HEK293 (cell line): ENCODE measurements at regions of chr3 and their contacts with region 1.

Region 1: DNA sequence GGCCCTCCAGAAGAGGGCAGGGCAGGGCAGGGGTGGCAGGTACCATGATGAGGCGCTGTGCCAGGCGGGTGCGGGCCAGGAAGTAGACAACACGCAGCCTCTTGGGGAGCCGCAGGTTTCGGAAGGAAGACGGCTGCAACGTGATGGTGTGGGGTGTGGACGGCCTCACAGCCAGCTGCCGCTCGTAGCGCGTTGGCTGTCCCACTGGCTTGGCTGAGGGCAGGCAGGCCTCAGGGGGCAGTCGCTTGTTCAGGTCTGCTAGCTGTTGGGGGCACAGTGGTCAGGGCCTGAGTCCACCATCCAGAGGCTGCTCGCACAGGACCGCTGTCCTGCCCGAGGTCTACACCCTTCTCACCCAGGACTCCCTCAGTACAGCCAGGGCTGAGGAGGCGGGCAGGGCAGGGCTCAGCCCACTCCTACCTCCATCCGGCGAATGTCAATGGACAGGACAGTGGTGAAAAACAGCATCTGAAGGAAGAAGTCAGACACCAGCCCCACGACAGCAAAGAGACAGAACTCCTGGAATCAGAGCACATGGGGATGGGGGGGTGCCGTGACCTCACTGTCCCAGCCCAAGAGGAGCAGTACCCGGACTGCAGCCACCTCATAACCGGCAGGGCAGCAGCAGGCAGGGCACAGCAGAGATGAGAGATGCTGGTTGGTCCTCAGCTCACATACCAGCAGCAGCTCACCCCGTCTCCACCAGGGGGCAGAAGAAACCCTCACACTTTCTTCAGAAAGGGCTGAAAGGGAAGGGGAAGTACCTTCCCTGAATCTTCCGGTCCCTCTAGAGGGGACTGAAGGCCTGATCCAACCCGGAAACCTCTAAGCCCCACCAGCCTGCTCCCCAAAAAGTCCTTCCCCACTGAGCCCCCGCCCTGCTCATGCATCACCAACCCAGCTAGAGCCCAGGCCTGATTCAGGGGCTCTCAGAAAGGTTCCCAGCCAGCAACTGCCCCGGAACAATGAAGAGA is 40.0 kb downstream of the PTPN23 start:
- H3K4me3 ChIP-seq: no peak overlapping the region
- H3K27ac ChIP-seq: no peak overlapping the region
- H3K4me1 ChIP-seq: no peaks in the 10 kb centered on the region
- CTCF ChIP-seq: peak; percentile 78

Region 2: DNA sequence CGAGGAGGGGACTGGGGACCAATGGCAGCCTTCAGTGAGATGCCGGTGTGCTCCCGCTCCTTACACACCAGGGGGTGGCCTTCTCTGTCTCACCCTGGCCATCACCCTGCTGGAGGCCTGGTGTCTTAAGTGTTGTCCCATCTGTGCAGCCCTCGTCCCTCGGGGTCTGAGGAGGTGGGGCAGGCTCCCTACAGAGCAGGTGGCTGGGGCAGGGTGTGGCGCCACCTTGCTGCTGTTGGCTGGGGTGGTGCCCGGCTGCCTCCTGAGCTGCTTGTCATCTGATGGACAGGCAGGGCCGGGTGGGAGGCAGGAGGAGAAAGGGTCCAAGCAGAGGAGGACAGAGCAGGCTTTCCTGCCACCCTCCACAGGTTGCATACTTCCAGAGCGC is 14.0 kb before region 1 on chr3:
- CTCF ChIA-PET with region 1: interaction called, 13 read pairs
- POLR2A ChIA-PET with region 1: interaction called, 3 read pairs
- H3K4me3 ChIP-seq: no peak overlapping the region
- H3K27ac ChIP-seq: no peak overlapping the region
- H3K4me1 ChIP-seq: no peaks in the 10 kb centered on the region
- CTCF ChIP-seq: peak; percentile 51

Region 3: GRCh38 chr3:47433796-47434195 is 13.0 kb after region 1 on chr3:
- CTCF ChIA-PET with region 1: interaction called, 18 read pairs
- POLR2A ChIA-PET with region 1: no interaction called
- H3K4me3 ChIP-seq: no peak overlapping the region
- H3K27ac ChIP-seq: no peak overlapping the region
- H3K4me1 ChIP-seq: no peaks in the 10 kb centered on the region
- CTCF ChIP-seq: no peak

Region 4: DNA sequence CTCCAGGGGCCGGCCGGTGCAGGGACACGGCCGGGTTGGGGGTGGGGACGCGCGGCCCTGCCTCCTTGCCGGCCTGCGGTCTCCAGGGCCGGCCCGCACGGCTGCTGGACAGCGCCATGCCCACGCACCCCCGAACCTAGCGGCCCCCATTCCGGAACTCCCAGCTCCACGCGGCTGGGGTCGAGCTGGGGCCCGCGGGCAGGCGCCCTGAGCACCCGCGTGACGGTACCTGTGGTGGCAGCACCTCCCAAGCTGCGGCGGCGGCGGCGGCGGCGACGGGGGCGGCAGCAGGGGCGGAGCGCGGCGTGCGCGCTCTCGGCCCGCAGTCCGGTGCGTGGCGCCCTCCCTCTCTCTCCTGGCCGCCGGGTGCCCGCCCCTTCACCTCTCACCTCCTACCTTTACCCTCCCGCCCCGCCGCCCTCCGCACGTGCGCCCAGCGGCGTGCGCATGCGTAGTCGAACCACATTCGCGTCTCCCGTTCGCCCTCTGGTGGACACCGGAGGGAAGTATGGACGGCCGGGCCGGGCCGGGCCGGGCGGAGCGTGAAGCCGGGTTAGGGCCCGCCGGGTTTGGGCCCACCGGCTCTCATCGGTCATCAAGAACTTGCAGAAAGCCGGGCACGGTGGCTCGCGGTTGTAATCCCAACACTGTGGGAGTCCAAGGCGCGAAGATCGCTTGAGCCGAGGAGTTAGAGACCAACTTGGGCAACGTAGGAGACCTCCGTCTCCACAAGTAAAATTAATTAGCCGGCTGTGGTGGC is 55.0 kb after region 1 on chr3 and contains the start of gene SCAP:
- CTCF ChIA-PET with region 1: interaction called, 10 read pairs
- POLR2A ChIA-PET with region 1: interaction called, 6 read pairs
- H3K4me3 ChIP-seq: peak within 1 kb of the TSS; percentile 78
- H3K27ac ChIP-seq: peak within 1 kb of the TSS; percentile 40
- H3K4me1 ChIP-seq: no peaks in the 10 kb centered on the region
- CTCF ChIP-seq: peak; percentile 95

Region 5: DNA sequence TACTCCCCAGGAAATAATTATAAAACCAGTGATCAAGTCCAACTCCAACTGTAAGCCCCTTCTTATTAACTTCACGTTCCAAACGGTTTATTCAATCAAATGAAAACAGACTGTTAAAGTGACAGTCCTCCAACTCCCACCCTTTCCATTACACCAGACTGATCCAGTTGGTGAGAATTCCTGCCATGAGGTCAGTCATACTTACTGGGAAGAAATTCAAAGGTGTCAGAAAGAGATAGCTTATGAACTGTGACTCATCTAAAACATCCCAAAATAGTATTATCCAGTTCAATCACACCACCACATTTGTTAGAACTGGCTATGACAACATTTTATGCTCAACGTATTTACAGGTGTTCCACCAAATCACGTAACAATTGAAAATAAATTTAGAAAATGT is 341.4 kb after region 1 on chr3:
- CTCF ChIA-PET with region 1: no interaction called
- POLR2A ChIA-PET with region 1: no interaction called
- H3K4me3 ChIP-seq: no peak overlapping the region
- H3K27ac ChIP-seq: no peak overlapping the region
- H3K4me1 ChIP-seq: no peaks in the 10 kb centered on the region; the same call in 1 of the 2 replicates
- CTCF ChIP-seq: no peak